ENCODE measurements at regions of chr10 and their contacts with region 1.

Region 1: DNA sequence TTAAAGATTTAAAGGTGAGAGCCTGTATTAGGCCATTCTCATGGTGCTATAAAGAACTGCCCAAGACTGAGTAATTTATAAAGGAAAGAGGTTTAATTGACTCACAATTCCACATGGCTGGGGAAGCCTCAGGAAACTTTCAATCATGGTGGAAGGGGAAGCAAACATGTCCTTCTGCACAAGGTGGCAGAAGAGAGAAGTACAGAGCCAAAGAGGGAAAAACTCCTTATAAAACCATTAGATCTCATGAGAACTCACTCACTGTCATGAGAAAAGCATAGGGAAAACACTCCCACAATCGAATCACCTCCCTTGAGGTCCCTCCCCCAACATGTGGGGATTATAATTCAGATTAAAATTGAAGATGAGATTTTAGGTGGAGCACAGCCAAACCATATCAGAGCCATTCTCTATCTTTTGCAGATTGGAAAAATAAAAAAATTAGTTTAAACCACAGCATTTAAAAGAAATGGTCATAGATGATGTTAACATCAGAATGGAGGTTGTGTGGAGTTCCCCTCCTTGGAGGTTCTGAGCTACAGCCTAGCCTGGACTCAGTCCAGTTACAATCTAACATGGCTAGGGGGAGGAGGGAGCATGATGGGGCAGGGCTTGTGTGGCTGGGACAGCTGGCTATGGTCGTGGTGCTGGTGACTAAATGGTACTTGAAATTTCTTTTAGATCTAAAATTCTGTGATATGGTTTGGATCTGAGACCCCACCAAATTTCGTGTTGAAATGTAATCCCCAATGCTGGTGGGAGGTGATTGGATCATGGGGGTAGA is 33.1 kb downstream of the GSTO2 start:
- DNase-seq: no peak
- ATAC-seq: no peak
- H3K4me3 ChIP-seq: no peak overlapping the region
- H3K4me3 Mint-ChIP-seq: peak overlapping the region; percentile 25
- H3K27ac ChIP-seq: no peak overlapping the region
- H3K27ac Mint-ChIP-seq: peak overlapping the region; percentile 34 to 71
- H3K4me1 ChIP-seq: peaks cover 73% of the 10 kb centered on the region
- H3K4me1 Mint-ChIP-seq: peaks cover 74 to 76% of the 10 kb centered on the region in 2 donors
- H3K27me3 ChIP-seq: no peaks in the 10 kb centered on the region
- H3K27me3 Mint-ChIP-seq: no peaks in the 10 kb centered on the region
- CTCF ChIP-seq: no peak

Region 2: GRCh38 chr10:104291439-104291951 is 10.6 kb before region 1 on chr10:
- intact Hi-C with region 1: loop called (anchors 1 kb)
- DNase-seq: peak; percentile 87 to 95
- ATAC-seq: peak; percentile 100
- H3K4me3 ChIP-seq: no peak overlapping the region
- H3K4me3 Mint-ChIP-seq: peak overlapping the region; percentile 21
- H3K27ac ChIP-seq: no peak overlapping the region
- H3K27ac Mint-ChIP-seq: no peak overlapping the region
- H3K4me1 ChIP-seq: peaks cover 7% of the 10 kb centered on the region
- H3K4me1 Mint-ChIP-seq: peaks cover 7 to 8% of the 10 kb centered on the region in 2 donors
- H3K27me3 ChIP-seq: peaks cover 3% of the 10 kb centered on the region
- H3K27me3 Mint-ChIP-seq: peaks cover 23 to 25% of the 10 kb centered on the region in 2 donors
- CTCF ChIP-seq: peak; percentile 100

Region 3: GRCh38 chr10:104322416-104322782 is 20.3 kb after region 1 on chr10:
- intact Hi-C with region 1: loop called (anchors 2 kb)
- DNase-seq: peak in 1 of 2 donors; percentile 51
- ATAC-seq: peak; percentile 9 to 26 (median 10)
- H3K4me3 ChIP-seq: no peak overlapping the region
- H3K4me3 Mint-ChIP-seq: peak overlapping the region; percentile 82
- H3K27ac ChIP-seq: peak overlapping the region; percentile 94
- H3K27ac Mint-ChIP-seq: peak overlapping the region; percentile 98 to 100
- H3K4me1 ChIP-seq: peaks cover 94% of the 10 kb centered on the region
- H3K4me1 Mint-ChIP-seq: peaks cover 100% of the 10 kb centered on the region in 2 donors
- H3K27me3 ChIP-seq: no peaks in the 10 kb centered on the region
- H3K27me3 Mint-ChIP-seq: no peaks in the 10 kb centered on the region
- CTCF ChIP-seq: no peak

Region 4: GRCh38 chr10:104350127-104350635 is 48.1 kb after region 1 on chr10:
- intact Hi-C with region 1: loop called (anchors 1 kb)
- DNase-seq: peak in 1 of 2 donors; percentile 84
- ATAC-seq: peak; percentile 68 to 72 (median 71)
- H3K4me3 ChIP-seq: no peak overlapping the region
- H3K4me3 Mint-ChIP-seq: no peak overlapping the region
- H3K27ac ChIP-seq: peak overlapping the region; percentile 47
- H3K27ac Mint-ChIP-seq: no peak overlapping the region
- H3K4me1 ChIP-seq: peaks cover 41% of the 10 kb centered on the region
- H3K4me1 Mint-ChIP-seq: peaks cover 16 to 29% of the 10 kb centered on the region in 2 donors
- H3K27me3 ChIP-seq: no peaks in the 10 kb centered on the region
- H3K27me3 Mint-ChIP-seq: no peaks in the 10 kb centered on the region
- CTCF ChIP-seq: peak; percentile 73

Measured in natural killer cell (primary cell).